ENCODE measurements at regions of chr16 and their contacts with region 1.

Region 1: DNA sequence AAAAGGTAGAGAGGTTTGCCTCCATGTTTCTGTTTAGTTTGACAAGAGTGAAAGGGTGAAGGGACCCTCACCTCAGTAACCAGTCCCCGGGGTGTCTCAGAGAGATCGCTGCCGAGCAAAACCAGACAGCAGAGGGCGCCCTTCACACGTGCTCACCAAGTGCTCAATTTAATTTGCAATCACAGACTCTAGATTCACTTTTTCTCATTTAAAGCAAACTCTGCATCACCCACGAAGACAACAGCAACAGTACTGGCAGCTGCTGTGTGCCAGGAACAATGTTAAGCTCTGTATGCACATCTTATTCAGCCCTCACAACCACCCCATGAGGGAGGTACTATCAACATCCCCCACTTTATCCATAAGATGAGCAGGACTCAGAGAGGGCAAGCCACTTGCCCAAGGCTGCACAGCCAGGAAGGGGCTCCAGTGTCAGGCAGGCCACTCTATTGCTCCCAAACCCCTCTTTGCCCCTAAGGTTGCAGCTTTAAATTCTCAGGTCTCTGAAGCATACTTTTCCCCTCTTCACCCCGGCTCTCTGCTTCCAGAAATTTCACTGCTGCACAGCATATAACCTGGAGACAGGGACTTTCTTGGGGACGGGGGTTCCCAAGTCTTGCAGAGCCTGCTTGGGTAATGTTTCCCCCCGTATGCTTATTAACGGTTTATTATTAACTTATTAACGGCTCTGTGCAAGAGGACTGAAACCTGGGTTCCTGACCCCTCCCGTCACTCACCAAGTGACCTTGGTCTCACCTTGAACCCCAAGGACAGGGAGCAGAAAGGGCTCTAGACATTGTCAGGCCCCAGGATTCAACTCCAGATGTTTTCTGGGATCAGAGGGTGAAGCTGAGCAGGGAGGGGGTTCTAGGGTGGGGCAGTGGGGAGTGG is 70.9 kb downstream of the CNGB1 start:
- DNase-seq: peak; percentile 79
- H3K4me3 ChIP-seq: no peak overlapping the region
- H3K27ac ChIP-seq: no peak overlapping the region
- H3K4me1 ChIP-seq: no peaks in the 10 kb centered on the region
- H3K27me3 ChIP-seq: no peaks in the 10 kb centered on the region
- CTCF ChIP-seq: peak; percentile 94

Region 2: GRCh38 chr16:57781741-57782606 is 118.0 kb before region 1 on chr16:
- CTCF ChIA-PET with region 1: interaction called, 10 read pairs
- POLR2A ChIA-PET with region 1: no interaction called
- intact Hi-C with region 1: no loop called
- DNase-seq: no peak
- H3K4me3 ChIP-seq: no peak overlapping the region
- H3K27ac ChIP-seq: no peak overlapping the region
- H3K4me1 ChIP-seq: no peaks in the 10 kb centered on the region
- H3K27me3 ChIP-seq: no peaks in the 10 kb centered on the region
- CTCF ChIP-seq: no peak

Region 3: DNA sequence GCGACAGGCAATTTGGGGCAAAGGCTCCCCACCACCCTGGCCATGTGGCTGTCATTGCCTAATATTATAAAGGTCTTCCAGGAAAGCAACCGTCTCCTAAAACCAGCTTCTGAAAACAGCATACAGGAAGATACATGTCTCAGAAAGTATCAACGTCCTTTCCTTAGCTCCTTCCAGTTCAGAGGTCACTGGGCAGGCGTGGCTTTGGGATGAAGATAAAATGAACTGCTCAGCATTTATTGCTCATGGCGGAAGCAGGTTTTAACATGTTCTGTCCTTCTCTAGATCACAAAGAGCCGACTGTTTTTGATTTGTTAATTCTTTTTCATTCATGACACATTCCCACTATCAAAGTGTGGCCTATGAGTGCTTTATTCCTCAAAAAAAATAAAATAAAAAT is 221.1 kb after region 1 on chr16:
- CTCF ChIA-PET with region 1: no interaction called
- POLR2A ChIA-PET with region 1: no interaction called
- intact Hi-C with region 1: loop called (anchors 2 kb)
- DNase-seq: no peak
- H3K4me3 ChIP-seq: peak overlapping the region; percentile 8
- H3K27ac ChIP-seq: no peak overlapping the region
- H3K4me1 ChIP-seq: peaks cover 54% of the 10 kb centered on the region
- H3K27me3 ChIP-seq: no peaks in the 10 kb centered on the region
- CTCF ChIP-seq: no peak